CD8-positive, alpha-beta T cell (primary cell): ENCODE measurements at regions of chr2 and their contacts with region 1.

Region 1: GRCh38 chr2:231452799-231453508 is 11.3 kb downstream of the NCL start:
- DNase-seq: no peak
- ATAC-seq: no peak
- H3K4me3 ChIP-seq: no peak overlapping the region
- H3K4me3 Mint-ChIP-seq: no peak overlapping the region
- H3K27ac ChIP-seq: no peak overlapping the region
- H3K27ac Mint-ChIP-seq: peak overlapping the region; percentile 79
- H3K4me1 ChIP-seq: no peaks in the 10 kb centered on the region
- H3K4me1 Mint-ChIP-seq: peaks cover 17% of the 10 kb centered on the region
- H3K27me3 ChIP-seq: no peaks in the 10 kb centered on the region
- H3K27me3 Mint-ChIP-seq: no peaks in the 10 kb centered on the region
- CTCF ChIP-seq: no peak

Region 2: DNA sequence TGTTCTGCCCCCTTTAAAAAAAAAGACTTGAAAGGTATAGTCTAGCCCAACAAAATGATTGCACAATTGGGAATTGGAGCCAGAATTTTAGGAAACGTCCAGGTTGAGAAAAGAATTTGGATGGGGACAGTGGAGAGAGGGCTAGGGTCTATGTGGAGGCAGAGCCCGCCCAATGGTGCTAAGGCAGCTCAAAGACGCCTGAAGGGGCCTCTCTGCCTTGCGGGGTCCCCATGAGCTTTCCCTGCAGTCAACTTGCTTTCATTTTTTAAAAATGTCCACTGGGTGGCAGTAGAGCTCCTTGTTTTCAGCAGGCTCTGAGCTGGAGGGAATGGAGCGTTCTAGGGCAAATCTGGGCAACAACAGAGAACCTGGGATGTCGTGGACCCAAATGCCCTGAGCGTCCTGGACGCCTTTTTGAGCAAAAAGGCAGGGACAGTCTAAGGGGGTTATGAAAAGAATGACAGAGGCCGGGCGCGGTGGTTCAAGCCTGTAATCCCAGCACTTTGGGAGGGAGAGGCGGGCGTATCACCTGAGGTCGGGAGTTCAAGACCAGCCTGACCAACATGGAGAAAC is 628.5 kb before region 1 on chr2:
- CTCF ChIA-PET with region 1: no interaction called
- POLR2A ChIA-PET with region 1: no interaction called
- intact Hi-C with region 1: loop called in 1 of 2 experiments (anchors 2 kb)
- DNase-seq: peak; percentile 17 to 88 (median 55)
- ATAC-seq: peak; percentile 90
- H3K4me3 ChIP-seq: no peak overlapping the region
- H3K4me3 Mint-ChIP-seq: peak overlapping the region; percentile 64
- H3K27ac ChIP-seq: no peak overlapping the region
- H3K27ac Mint-ChIP-seq: no peak overlapping the region
- H3K4me1 ChIP-seq: peaks cover 5% of the 10 kb centered on the region
- H3K4me1 Mint-ChIP-seq: peaks cover 7% of the 10 kb centered on the region
- H3K27me3 ChIP-seq: peaks cover 11 to 12% of the 10 kb centered on the region in 2 experiments
- H3K27me3 Mint-ChIP-seq: peaks cover 29% of the 10 kb centered on the region
- CTCF ChIP-seq: peak; percentile 83

Region 3: DNA sequence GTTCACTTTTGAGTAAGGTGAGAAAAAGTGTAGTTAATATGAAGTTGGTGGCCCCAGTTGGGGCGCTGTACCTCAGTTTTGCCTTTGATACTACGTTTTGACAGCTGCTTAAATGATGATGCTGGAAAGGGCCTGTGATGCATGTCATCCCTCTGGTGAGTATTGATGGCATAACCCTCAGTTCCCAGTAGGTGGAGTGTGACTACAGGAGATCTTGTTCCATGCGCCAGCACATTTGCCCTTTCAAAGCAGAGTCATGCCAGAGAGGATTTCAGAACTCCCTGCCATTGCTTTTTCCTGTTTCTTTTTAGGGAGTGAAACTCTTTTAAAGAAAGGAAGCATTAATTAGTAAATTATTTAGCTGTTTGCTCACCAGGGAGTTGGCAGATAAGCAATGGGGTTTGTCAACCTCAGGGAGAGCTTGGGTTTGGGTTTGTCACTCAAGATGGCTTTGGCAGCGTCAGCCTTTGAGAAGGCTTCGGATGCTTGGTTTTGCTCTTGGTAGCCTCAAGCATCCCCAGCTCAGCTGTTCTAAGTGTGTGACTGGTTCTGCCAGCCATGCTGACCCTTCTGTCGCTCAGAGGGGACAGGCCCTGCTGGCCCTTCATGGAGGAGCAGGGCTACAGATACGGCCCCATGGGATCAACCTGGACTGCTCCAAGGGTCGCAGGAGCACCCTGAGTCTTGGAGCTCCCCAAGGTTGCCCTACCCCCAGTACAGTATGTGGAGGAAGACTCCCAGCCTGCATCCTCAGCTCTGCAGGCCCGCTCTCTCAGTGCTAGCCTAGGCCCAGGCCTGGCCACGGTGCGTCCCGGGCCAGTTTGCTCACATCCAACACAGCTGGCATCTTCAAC is 225.4 kb before region 1 on chr2:
- CTCF ChIA-PET with region 1: interaction called, 34 read pairs
- POLR2A ChIA-PET with region 1: interaction called, 4 read pairs
- intact Hi-C with region 1: loop called in 1 of 2 experiments (anchors 1 kb)
- DNase-seq: peak in 8 of 9 experiments; percentile 10 to 73 (median 37)
- ATAC-seq: peak; percentile 89
- H3K4me3 ChIP-seq: no peak overlapping the region
- H3K4me3 Mint-ChIP-seq: no peak overlapping the region
- H3K27ac ChIP-seq: no peak overlapping the region
- H3K27ac Mint-ChIP-seq: no peak overlapping the region
- H3K4me1 ChIP-seq: no peaks in the 10 kb centered on the region
- H3K4me1 Mint-ChIP-seq: no peaks in the 10 kb centered on the region
- H3K27me3 ChIP-seq: no peaks in the 10 kb centered on the region
- H3K27me3 Mint-ChIP-seq: no peaks in the 10 kb centered on the region
- CTCF ChIP-seq: peak; percentile 64

Region 4: GRCh38 chr2:231297108-231297908 is 155.6 kb before region 1 on chr2:
- CTCF ChIA-PET with region 1: interaction called, 12 read pairs
- POLR2A ChIA-PET with region 1: no interaction called
- intact Hi-C with region 1: loop called (anchors 1 kb)
- DNase-seq: peak in 4 of 9 experiments; percentile 14 to 49 (median 30)
- ATAC-seq: no peak
- H3K4me3 ChIP-seq: no peak overlapping the region
- H3K4me3 Mint-ChIP-seq: no peak overlapping the region
- H3K27ac ChIP-seq: no peak overlapping the region
- H3K27ac Mint-ChIP-seq: no peak overlapping the region
- H3K4me1 ChIP-seq: no peaks in the 10 kb centered on the region
- H3K4me1 Mint-ChIP-seq: peaks cover 2% of the 10 kb centered on the region
- H3K27me3 ChIP-seq: no peaks in the 10 kb centered on the region
- H3K27me3 Mint-ChIP-seq: no peaks in the 10 kb centered on the region
- CTCF ChIP-seq: no peak

Region 5: GRCh38 chr2:231411831-231412617 is 40.9 kb before region 1 on chr2:
- CTCF ChIA-PET with region 1: no interaction called
- POLR2A ChIA-PET with region 1: no interaction called
- intact Hi-C with region 1: loop called in 1 of 2 experiments (anchors 2 kb)
- DNase-seq: peak; percentile 28 to 85 (median 74)
- ATAC-seq: peak; percentile 97
- H3K4me3 ChIP-seq: peak overlapping the region in 1 of 2 experiments; percentile 50
- H3K4me3 Mint-ChIP-seq: peak overlapping the region; percentile 60
- H3K27ac ChIP-seq: no peak overlapping the region
- H3K27ac Mint-ChIP-seq: no peak overlapping the region
- H3K4me1 ChIP-seq: peaks cover 5% of the 10 kb centered on the region
- H3K4me1 Mint-ChIP-seq: peaks cover 6% of the 10 kb centered on the region
- H3K27me3 ChIP-seq: peaks cover 0 to 11% of the 10 kb centered on the region in 2 experiments
- H3K27me3 Mint-ChIP-seq: peaks cover 34% of the 10 kb centered on the region
- CTCF ChIP-seq: peak; percentile 44

Region 6: GRCh38 chr2:231987124-231987727 is 534.3 kb after region 1 on chr2:
- CTCF ChIA-PET with region 1: no interaction called
- POLR2A ChIA-PET with region 1: no interaction called
- intact Hi-C with region 1: no loop called
- DNase-seq: no peak
- ATAC-seq: no peak
- H3K4me3 ChIP-seq: no peak overlapping the region
- H3K4me3 Mint-ChIP-seq: no peak overlapping the region
- H3K27ac ChIP-seq: no peak overlapping the region
- H3K27ac Mint-ChIP-seq: no peak overlapping the region
- H3K4me1 ChIP-seq: no peaks in the 10 kb centered on the region
- H3K4me1 Mint-ChIP-seq: peaks cover 38% of the 10 kb centered on the region
- H3K27me3 ChIP-seq: no peaks in the 10 kb centered on the region
- H3K27me3 Mint-ChIP-seq: no peaks in the 10 kb centered on the region
- CTCF ChIP-seq: no peak